CD14-positive monocyte (primary cell): ENCODE measurements at regions of chr9 and their contacts with region 1.

Region 1: DNA sequence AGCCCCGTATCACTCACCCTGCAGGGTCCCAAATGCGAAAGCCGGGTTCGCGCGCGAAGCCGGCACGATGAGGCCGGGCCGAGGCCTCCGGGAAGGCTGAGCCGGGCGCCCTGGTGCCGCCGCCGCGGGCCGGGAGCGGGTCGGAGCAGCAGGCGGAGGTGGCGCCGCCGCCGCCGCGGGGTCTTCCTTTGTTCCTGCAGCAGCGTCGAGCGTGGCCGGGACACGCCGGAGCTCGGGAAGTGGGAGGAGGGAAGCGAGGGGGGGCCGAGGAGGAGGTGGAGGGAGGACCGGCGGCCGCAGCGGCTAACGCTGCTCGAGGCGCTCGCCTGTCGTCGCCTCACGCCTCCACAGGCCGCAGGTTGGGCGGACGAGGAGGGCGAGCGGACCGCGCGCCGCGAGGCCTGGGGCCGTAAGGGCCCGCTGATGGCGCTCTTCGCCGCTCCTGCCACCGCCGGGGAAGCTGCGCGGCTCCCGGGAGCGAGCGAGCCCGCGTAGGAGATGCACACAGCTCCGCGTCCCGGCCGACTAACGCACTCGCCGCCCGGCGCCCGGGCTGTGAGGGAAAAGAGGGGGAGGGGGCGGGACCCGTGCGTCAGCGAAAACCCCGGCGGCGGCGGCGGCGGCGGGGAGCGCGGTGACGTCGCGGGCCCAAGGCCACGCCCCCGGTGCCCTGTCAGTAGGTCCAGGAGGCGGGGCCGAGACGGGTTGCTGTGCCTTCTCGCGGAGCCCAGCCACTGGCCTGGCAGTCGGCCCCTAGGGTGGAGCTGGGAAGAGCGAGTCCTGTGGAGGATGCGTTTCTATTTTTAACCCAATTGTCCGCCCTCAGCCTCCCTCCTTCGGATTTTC is at the start of gene ZFAND5:
- DNase-seq: peak; percentile 96 to 97 (median 97)
- H3K4me3 ChIP-seq: peak within 1 kb of the TSS; percentile 77 to 100 (median 98)
- H3K4me3 Mint-ChIP-seq: peak within 1 kb of the TSS; percentile 95 to 96
- H3K27ac ChIP-seq: peak within 1 kb of the TSS; percentile 97 to 100
- H3K27ac Mint-ChIP-seq: peak within 1 kb of the TSS; percentile 100
- H3K4me1 ChIP-seq: peaks cover 27 to 35% of the 10 kb centered on the region in 2 donors
- H3K4me1 Mint-ChIP-seq: peaks cover 20% of the 10 kb centered on the region
- H3K27me3 ChIP-seq: no peaks in the 10 kb centered on the region
- H3K27me3 Mint-ChIP-seq: peaks cover 0 to 4% (median 0%) of the 10 kb centered on the region in 3 donors
- CTCF ChIP-seq: no peak
- polyA plus RNA-seq, gene ZFAND5: 199 to 702 (median 237) TPM

Region 2: GRCh38 chr9:72305102-72305546 is 59.8 kb before region 1 on chr9:
- intact Hi-C with region 1: loop called in 1 of 2 experiments (anchors 5 kb)
- DNase-seq: peak; percentile 98 to 99 (median 99)
- H3K4me3 ChIP-seq: peak overlapping the region; percentile 56 to 99 (median 82)
- H3K4me3 Mint-ChIP-seq: peak overlapping the region; percentile 73 to 91
- H3K27ac ChIP-seq: peak overlapping the region; percentile 87 to 92
- H3K27ac Mint-ChIP-seq: peak overlapping the region; percentile 97 to 99 (median 97)
- H3K4me1 ChIP-seq: peaks cover 60 to 73% of the 10 kb centered on the region in 2 donors
- H3K4me1 Mint-ChIP-seq: peaks cover 70% of the 10 kb centered on the region
- H3K27me3 ChIP-seq: no peaks in the 10 kb centered on the region
- H3K27me3 Mint-ChIP-seq: no peaks in the 10 kb centered on the region
- CTCF ChIP-seq: no peak

Region 3: DNA sequence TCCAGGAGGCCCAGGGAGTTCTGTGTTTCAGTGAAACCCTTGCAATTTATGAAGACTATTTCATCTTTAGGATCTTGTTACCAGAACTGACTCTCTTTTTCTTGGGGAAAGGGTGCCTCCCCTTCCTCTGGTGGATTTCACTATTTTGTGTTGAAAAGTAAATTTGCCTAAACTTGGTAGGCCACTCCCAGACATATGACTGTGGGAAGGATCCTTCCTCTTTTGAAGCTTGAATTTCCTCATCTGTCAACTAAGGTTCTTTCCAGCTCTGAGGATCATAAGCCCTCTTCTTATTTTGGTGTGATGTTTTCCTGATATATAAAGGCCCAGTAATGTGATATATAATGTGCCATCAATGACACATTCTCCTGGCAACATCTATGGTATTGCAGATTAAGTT is 59.2 kb after region 1 on chr9:
- intact Hi-C with region 1: loop called in 1 of 2 experiments (anchors 5 kb)
- DNase-seq: peak; percentile 79 to 91 (median 90)
- H3K4me3 ChIP-seq: peak overlapping the region in 1 of 3 experiments; percentile 21
- H3K4me3 Mint-ChIP-seq: peak overlapping the region in 1 of 2 donors; percentile 66
- H3K27ac ChIP-seq: peak overlapping the region; percentile 86
- H3K27ac Mint-ChIP-seq: peak overlapping the region; percentile 88 to 98 (median 96)
- H3K4me1 ChIP-seq: peaks cover 52 to 57% of the 10 kb centered on the region in 2 donors
- H3K4me1 Mint-ChIP-seq: peaks cover 50% of the 10 kb centered on the region
- H3K27me3 ChIP-seq: no peaks in the 10 kb centered on the region
- H3K27me3 Mint-ChIP-seq: no peaks in the 10 kb centered on the region
- CTCF ChIP-seq: no peak

Region 4: GRCh38 chr9:72473474-72474261 is 108.8 kb after region 1 on chr9:
- intact Hi-C with region 1: loop called in 1 of 2 experiments (anchors 5 kb)
- DNase-seq: peak; percentile 57 to 86 (median 71)
- H3K4me3 ChIP-seq: no peak overlapping the region
- H3K4me3 Mint-ChIP-seq: no peak overlapping the region
- H3K27ac ChIP-seq: peak overlapping the region in 1 of 2 donors; percentile 72
- H3K27ac Mint-ChIP-seq: peak overlapping the region; percentile 70 to 94 (median 84)
- H3K4me1 ChIP-seq: peaks cover 15 to 25% of the 10 kb centered on the region in 2 donors
- H3K4me1 Mint-ChIP-seq: peaks cover 21% of the 10 kb centered on the region
- H3K27me3 ChIP-seq: no peaks in the 10 kb centered on the region
- H3K27me3 Mint-ChIP-seq: peaks cover 1 to 5% (median 3%) of the 10 kb centered on the region in 3 donors
- CTCF ChIP-seq: no peak

Region 5: GRCh38 chr9:72592502-72593403 is 227.9 kb after region 1 on chr9:
- intact Hi-C with region 1: loop called (anchors 2 to 5 kb)
- DNase-seq: peak; percentile 60 to 74 (median 73)
- H3K4me3 ChIP-seq: peak overlapping the region in 1 of 3 experiments; percentile 5
- H3K4me3 Mint-ChIP-seq: peak overlapping the region in 1 of 2 donors; percentile 66
- H3K27ac ChIP-seq: peak overlapping the region; percentile 51 to 71
- H3K27ac Mint-ChIP-seq: peak overlapping the region; percentile 85 to 96 (median 92)
- H3K4me1 ChIP-seq: peaks cover 72 to 77% of the 10 kb centered on the region in 2 donors
- H3K4me1 Mint-ChIP-seq: peaks cover 71% of the 10 kb centered on the region
- H3K27me3 ChIP-seq: no peaks in the 10 kb centered on the region
- H3K27me3 Mint-ChIP-seq: peaks cover 0 to 4% (median 2%) of the 10 kb centered on the region in 3 donors
- CTCF ChIP-seq: peak; percentile 98